ENCODE measurements at regions of chr22 and their contacts with region 1.

Region 1: GRCh38 chr22:50030297-50031188 is 18.0 kb upstream of the IL17REL start:
- H3K4me3 ChIP-seq: no peak overlapping the region
- H3K27ac ChIP-seq: no peak overlapping the region; the same call in 1 of the 2 replicates
- H3K4me1 ChIP-seq: no peaks in the 10 kb centered on the region
- CTCF ChIP-seq: peak; percentile 98

Region 2: GRCh38 chr22:49767355-49768062 is 263.0 kb before region 1 on chr22:
- CTCF ChIA-PET with region 1: interaction called, 11 read pairs
- POLR2A ChIA-PET with region 1: no interaction called
- H3K4me3 ChIP-seq: no peak overlapping the region
- H3K27ac ChIP-seq: no peak overlapping the region
- H3K4me1 ChIP-seq: no peaks in the 10 kb centered on the region
- CTCF ChIP-seq: peak; percentile 52

Region 3: DNA sequence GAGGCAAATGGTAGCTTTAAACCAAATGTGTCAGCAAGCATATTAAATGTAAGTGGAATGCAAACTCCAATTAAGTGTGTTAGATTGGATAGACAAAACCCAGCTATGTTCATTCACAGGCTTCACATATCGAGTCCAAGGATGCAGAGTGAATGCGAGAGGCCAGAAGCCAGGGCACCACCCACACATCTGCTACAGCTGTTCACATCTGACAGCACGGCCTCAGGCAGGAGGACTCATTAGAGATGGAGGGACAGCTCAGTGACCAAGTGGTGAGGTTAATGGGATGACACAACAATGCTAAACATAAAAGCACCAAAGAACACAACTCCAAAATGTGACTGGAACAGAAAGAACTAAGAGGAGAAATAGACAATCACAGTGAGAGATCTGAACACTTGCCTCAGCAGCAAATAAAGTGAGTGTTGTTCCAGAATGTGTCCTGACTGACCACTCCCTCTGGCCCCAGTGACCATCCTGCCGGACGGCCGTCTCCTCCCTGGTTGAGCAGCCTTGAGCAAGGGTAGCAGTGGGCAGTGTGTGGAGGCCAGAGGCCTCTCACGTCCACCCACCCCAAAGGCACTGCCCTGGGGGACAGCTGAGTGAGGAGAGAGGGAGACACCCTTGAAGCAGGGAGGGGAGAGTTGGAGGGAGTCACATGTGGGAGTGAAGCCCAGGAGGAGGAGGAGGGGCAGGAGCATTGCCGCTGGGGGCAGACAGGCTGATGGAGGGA is 136.1 kb before region 1 on chr22:
- CTCF ChIA-PET with region 1: no interaction called
- POLR2A ChIA-PET with region 1: no interaction called
- H3K4me3 ChIP-seq: no peak overlapping the region
- H3K27ac ChIP-seq: no peak overlapping the region
- H3K4me1 ChIP-seq: no peaks in the 10 kb centered on the region
- CTCF ChIP-seq: no peak

Region 4: GRCh38 chr22:49930739-49931412 is 99.7 kb before region 1 on chr22:
- CTCF ChIA-PET with region 1: interaction called, 67 read pairs
- POLR2A ChIA-PET with region 1: interaction called, 4 read pairs
- H3K4me3 ChIP-seq: no peak overlapping the region
- H3K27ac ChIP-seq: no peak overlapping the region
- H3K4me1 ChIP-seq: no peaks in the 10 kb centered on the region
- CTCF ChIP-seq: peak; percentile 84

Region 5: GRCh38 chr22:50089682-50090411 is 59.3 kb after region 1 on chr22 and contains the start of gene MOV10L1:
- CTCF ChIA-PET with region 1: no interaction called
- POLR2A ChIA-PET with region 1: no interaction called
- H3K4me3 ChIP-seq: no peak within 1 kb of the TSS
- H3K27ac ChIP-seq: no peak within 1 kb of the TSS
- H3K4me1 ChIP-seq: no peaks in the 10 kb centered on the region
- CTCF ChIP-seq: no peak

Region 6: DNA sequence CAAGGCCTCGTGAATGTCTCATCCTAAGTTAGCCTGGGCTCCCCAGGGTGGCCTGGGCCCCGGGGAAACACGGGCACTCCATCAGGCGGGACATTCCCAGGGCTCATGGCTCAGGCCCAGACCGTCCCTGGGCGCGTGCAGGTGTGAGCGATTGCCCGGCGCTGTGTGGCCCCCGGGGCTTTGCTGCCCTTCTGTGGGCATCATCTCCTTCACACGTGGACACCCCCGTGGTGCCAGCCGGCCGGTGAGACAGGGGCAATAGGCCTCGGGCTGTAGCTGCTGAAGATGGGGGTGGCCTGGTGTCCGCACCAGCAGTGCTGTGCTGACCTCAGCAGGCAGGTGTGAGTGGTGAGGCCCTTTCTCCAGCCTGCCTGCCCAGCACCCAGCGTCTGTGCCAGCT is 165.7 kb after region 1 on chr22:
- CTCF ChIA-PET with region 1: no interaction called
- POLR2A ChIA-PET with region 1: no interaction called
- H3K4me3 ChIP-seq: no peak overlapping the region
- H3K27ac ChIP-seq: peak overlapping the region; percentile 16; the same call in 1 of the 2 replicates
- H3K4me1 ChIP-seq: peaks cover 5% of the 10 kb centered on the region; the same call in 1 of the 2 replicates
- CTCF ChIP-seq: no peak

Region 7: GRCh38 chr22:50276143-50276542 is 245.6 kb after region 1 on chr22:
- CTCF ChIA-PET with region 1: no interaction called
- POLR2A ChIA-PET with region 1: no interaction called
- H3K4me3 ChIP-seq: no peak overlapping the region
- H3K27ac ChIP-seq: no peak overlapping the region
- H3K4me1 ChIP-seq: peaks cover 6% of the 10 kb centered on the region
- CTCF ChIP-seq: no peak